Heart left ventricle (tissue), 16 donors: ENCODE measurements at regions of chr19 and their contacts with region 1.

Region 1: GRCh38 chr19:4267101-4267900 is 11.8 kb upstream of the SHD start:
- DNase-seq: peak in 3 of 5 donors; percentile 34 to 60 (median 43)
- ATAC-seq: peak in 3 of 4 donors; percentile 56 to 78 (median 72)
- H3K4me3 ChIP-seq: no peak overlapping the region
- H3K27ac ChIP-seq: no peak overlapping the region
- H3K4me1 ChIP-seq: peaks cover 0 to 7% (median 0%) of the 10 kb centered on the region in 12 donors
- H3K27me3 ChIP-seq: no peaks in the 10 kb centered on the region
- CTCF ChIP-seq: peak; percentile 75 to 92 (median 84)
- POLR2A ChIP-seq: no peak

Region 2: GRCh38 chr19:4229179-4229931 is 37.9 kb before region 1 on chr19 and contains the start of gene EBI3:
- intact Hi-C with region 1: no loop called
- DNase-seq: peak in 3 of 5 donors; percentile 31 to 45 (median 32)
- ATAC-seq: peak; percentile 32 to 75 (median 66)
- H3K4me3 ChIP-seq: peak within 1 kb of the TSS in 3 of 12 donors; percentile 2 to 25 (median 19)
- H3K27ac ChIP-seq: no peak within 1 kb of the TSS
- H3K4me1 ChIP-seq: peaks cover 0 to 11% (median 0%) of the 10 kb centered on the region in 12 donors
- H3K27me3 ChIP-seq: peaks cover 5 to 75% (median 21%) of the 10 kb centered on the region in 9 donors
- CTCF ChIP-seq: no peak
- POLR2A ChIP-seq: no peak
- total RNA-seq, gene EBI3: 0.27 to 5.6 (median 0.54) TPM

Region 3: GRCh38 chr19:4313847-4314490 is 46.7 kb after region 1 on chr19:
- intact Hi-C with region 1: no loop called
- DNase-seq: no peak
- ATAC-seq: no peak
- H3K4me3 ChIP-seq: peak overlapping the region in 1 of 12 donors; percentile 3
- H3K27ac ChIP-seq: peak overlapping the region in 1 of 12 donors; percentile 73
- H3K4me1 ChIP-seq: peaks cover 0 to 14% (median 0%) of the 10 kb centered on the region in 12 donors
- H3K27me3 ChIP-seq: peaks cover 0 to 6% (median 0%) of the 10 kb centered on the region in 9 donors
- CTCF ChIP-seq: no peak
- POLR2A ChIP-seq: no peak

Region 4: GRCh38 chr19:4328243-4328990 is 61.1 kb after region 1 on chr19:
- intact Hi-C with region 1: loop called in 1 of 10 experiments (anchors 10 kb)
- DNase-seq: peak; percentile 89 to 98 (median 95)
- ATAC-seq: peak; percentile 94 to 96 (median 96)
- H3K4me3 ChIP-seq: peak overlapping the region in 11 of 12 donors; percentile 13 to 62 (median 53)
- H3K27ac ChIP-seq: peak overlapping the region in 1 of 12 donors; percentile 31
- H3K4me1 ChIP-seq: peaks cover 0 to 24% (median 16%) of the 10 kb centered on the region in 12 donors
- H3K27me3 ChIP-seq: peaks cover 0 to 5% (median 0%) of the 10 kb centered on the region in 9 donors
- CTCF ChIP-seq: no peak
- POLR2A ChIP-seq: peak in 1 of 2 donors; percentile 36

Region 5: DNA sequence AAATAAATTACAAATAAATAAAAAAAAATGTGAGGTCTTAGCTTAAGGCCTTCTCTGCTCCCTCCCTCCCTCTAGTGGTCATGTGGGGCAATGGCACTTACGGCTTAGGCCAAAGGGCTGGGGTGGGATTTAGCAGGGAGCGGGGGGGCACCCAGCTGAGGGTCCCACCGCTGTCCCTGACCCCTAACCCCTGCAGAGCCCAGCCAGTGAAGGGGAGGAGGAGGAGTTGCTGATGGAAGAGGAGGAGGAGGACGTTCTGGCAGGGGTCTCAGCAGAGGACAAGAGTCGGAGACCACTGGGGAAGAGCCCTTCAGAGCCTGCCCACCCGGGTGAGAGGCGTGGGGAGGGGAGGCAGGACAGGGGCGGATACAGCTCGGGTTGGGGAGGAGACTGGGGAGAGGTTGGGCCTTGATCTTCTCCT is 85.4 kb after region 1 on chr19:
- intact Hi-C with region 1: loop called (anchors 2 to 10 kb)
- DNase-seq: no peak
- ATAC-seq: peak in 3 of 4 donors; percentile 41 to 54 (median 54)
- H3K4me3 ChIP-seq: no peak overlapping the region
- H3K27ac ChIP-seq: no peak overlapping the region
- H3K4me1 ChIP-seq: peaks cover 0 to 11% (median 0%) of the 10 kb centered on the region in 12 donors
- H3K27me3 ChIP-seq: no peaks in the 10 kb centered on the region
- CTCF ChIP-seq: peak; percentile 54 to 94 (median 86)
- POLR2A ChIP-seq: no peak

Region 6: DNA sequence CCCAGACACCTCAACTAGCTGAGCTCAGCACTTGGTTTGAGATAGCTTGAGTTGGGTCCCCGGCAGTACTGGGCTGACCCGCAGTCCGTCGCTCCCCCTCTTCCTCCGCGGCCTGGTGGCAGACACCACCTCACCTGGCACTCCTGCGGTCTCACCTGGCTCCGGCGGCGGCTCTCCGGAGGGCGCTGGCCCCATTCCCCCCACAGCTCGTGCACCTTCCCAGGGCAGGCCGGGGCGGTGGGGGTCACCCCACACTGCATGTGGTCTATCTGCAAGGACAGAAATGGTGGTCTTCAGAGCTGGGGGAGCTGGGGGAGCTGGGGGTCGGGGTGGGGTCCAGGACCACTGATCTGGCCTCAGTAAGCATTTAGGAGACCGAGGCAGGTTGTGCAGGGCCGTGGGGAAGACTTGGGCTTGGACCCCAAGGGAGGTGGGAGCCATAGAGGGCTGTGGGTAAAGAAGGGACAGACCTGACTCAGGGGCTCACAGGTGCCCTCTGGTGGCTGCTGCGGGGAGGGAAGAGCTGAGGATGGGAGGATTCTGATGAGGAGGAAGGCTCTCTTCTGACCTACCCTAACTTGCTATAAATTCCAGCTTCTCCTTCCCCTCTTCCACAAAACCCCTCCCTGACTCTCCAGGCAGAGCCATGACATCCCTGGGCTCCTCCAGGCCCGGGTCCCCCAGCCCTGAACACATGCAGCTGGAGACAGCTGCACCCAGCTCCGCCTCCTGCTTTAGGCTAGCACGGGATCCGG is 257.7 kb after region 1 on chr19:
- intact Hi-C with region 1: loop called in 5 of 10 experiments (anchors 10 kb)
- DNase-seq: peak in 4 of 5 donors; percentile 43 to 71 (median 54)
- ATAC-seq: peak in 3 of 4 donors; percentile 46 to 60 (median 58)
- H3K4me3 ChIP-seq: peak overlapping the region in 1 of 12 donors; percentile 15
- H3K27ac ChIP-seq: no peak overlapping the region
- H3K4me1 ChIP-seq: peaks cover 0 to 5% (median under 1%) of the 10 kb centered on the region in 12 donors
- H3K27me3 ChIP-seq: no peaks in the 10 kb centered on the region
- CTCF ChIP-seq: peak; percentile 61 to 79 (median 72)
- POLR2A ChIP-seq: no peak